Endothelial cell of umbilical vein (primary cell): ENCODE measurements at regions of chr13 and their contacts with region 1.

Region 1: GRCh38 chr13:69857183-69857821 is 250.3 kb upstream of the ATXN8OS start:
- DNase-seq: peak; percentile 64
- H3K4me3 ChIP-seq: no peak overlapping the region
- H3K27ac ChIP-seq: no peak overlapping the region
- H3K4me1 ChIP-seq: peaks cover 9% of the 10 kb centered on the region
- H3K27me3 ChIP-seq: no peaks in the 10 kb centered on the region
- CTCF ChIP-seq: peak; percentile 38 to 44
- POLR2A ChIP-seq: no peak

Region 2: DNA sequence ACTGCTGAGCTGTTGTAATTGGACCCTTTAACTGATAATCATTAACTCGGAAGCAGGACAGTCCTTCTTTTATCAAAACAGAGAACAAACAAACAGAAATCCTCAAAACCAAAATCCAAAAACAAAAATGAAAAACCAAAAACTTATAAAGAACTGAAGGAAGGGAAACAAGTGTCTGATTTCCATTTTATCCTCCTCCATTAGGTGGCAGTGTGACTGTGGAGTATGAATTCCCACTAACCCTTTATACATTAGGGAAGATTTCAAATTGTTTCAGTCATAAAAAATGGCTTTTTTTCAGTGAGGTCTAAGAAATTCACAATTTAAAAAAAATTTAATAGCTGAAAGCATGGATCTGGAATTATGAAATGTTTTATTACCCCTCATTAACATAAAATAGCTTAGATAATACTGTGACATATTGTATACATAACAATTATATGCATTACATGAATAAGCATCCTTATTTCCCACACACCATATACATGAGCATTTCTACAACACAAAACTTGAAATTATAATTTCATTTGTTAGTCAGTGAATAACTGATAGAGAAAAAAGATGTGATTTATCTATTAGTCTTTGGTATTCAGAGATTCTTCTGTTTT is 1552.9 kb before region 1 on chr13:
- CTCF ChIA-PET with region 1: no interaction called
- POLR2A ChIA-PET with region 1: no interaction called
- dilution Hi-C with region 1: no loop called
- intact Hi-C with region 1: loop called (anchors 5 kb)
- DNase-seq: peak; percentile 14
- H3K4me3 ChIP-seq: no peak overlapping the region
- H3K27ac ChIP-seq: no peak overlapping the region
- H3K4me1 ChIP-seq: no peaks in the 10 kb centered on the region
- H3K27me3 ChIP-seq: no peaks in the 10 kb centered on the region
- CTCF ChIP-seq: peak; percentile 35 to 42
- POLR2A ChIP-seq: no peak

Region 3: DNA sequence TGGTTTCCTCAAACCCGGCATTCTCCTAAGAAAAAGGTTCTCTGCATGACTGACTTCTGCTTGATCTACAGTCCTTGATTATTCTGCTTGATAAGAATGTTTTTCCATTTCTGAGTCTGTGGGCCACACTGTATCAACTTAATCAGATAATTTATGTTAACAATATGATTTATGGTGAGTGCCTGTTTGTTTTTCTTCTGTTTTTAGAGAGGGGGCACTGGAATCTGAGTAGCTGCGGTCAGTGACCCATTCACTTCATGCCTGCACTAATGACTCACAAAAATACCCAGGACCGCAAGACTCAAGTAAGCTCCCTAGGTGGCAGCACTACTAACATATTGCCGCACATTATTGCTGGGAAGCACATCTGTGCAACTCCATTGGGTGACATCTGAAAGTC is 292.0 kb before region 1 on chr13:
- CTCF ChIA-PET with region 1: no interaction called
- POLR2A ChIA-PET with region 1: no interaction called
- dilution Hi-C with region 1: no loop called
- intact Hi-C with region 1: loop called (anchors 10 kb)
- DNase-seq: peak; percentile 5
- H3K4me3 ChIP-seq: no peak overlapping the region
- H3K27ac ChIP-seq: no peak overlapping the region
- H3K4me1 ChIP-seq: no peaks in the 10 kb centered on the region
- H3K27me3 ChIP-seq: no peaks in the 10 kb centered on the region
- CTCF ChIP-seq: peak; percentile 18 to 19
- POLR2A ChIP-seq: no peak

Region 4: DNA sequence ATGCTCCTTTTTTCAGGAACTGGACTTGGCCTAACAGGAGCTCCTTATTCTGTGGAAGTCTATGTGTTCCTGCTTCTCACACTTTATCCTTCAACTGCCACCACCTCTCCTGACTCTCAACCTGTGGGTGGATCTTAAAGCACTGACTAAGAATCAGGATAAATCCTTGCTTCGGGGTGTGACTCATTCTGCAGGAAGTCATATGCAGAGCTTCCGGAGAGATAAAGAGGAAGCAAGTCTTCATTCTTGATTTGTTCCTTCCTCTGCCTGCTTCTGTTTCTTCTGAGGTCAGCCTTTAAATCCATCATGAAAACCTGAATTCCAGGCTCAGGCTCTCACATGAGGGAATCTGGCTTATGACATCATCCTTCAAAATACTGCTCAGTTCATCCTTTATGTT is 113.2 kb after region 1 on chr13:
- CTCF ChIA-PET with region 1: no interaction called
- POLR2A ChIA-PET with region 1: no interaction called
- dilution Hi-C with region 1: no loop called
- intact Hi-C with region 1: loop called (anchors 1 kb)
- DNase-seq: peak; percentile 82
- H3K4me3 ChIP-seq: no peak overlapping the region
- H3K27ac ChIP-seq: peak overlapping the region; percentile 87
- H3K4me1 ChIP-seq: peaks cover 19% of the 10 kb centered on the region
- H3K27me3 ChIP-seq: no peaks in the 10 kb centered on the region
- CTCF ChIP-seq: no peak
- POLR2A ChIP-seq: no peak

Region 5: DNA sequence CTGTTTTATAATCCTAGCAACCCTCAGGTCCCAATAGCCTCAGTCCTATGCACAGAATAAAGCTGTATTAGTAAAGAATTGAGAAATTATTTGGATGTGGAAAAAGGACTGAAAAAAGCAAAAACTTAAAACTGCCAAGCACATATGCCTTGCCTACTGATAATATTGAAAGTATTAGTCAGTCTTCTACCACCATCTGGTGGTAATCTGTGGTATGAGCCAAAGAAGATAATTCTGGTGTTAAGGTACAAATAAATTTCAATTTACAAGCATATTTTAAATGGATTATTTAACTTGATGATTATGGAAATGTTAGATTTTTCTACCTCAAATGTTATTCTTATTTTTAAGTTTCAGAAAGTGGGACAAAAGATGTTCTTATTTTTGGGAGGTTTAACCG is 711.3 kb after region 1 on chr13:
- CTCF ChIA-PET with region 1: no interaction called
- POLR2A ChIA-PET with region 1: no interaction called
- dilution Hi-C with region 1: no loop called
- intact Hi-C with region 1: loop called (anchors 2 kb)
- DNase-seq: peak; percentile 68
- H3K4me3 ChIP-seq: no peak overlapping the region
- H3K27ac ChIP-seq: no peak overlapping the region
- H3K4me1 ChIP-seq: no peaks in the 10 kb centered on the region
- H3K27me3 ChIP-seq: no peaks in the 10 kb centered on the region
- CTCF ChIP-seq: peak; percentile 35 to 48
- POLR2A ChIP-seq: no peak